ENCODE measurements at regions of chr9 and their contacts with region 1.

Region 1: DNA sequence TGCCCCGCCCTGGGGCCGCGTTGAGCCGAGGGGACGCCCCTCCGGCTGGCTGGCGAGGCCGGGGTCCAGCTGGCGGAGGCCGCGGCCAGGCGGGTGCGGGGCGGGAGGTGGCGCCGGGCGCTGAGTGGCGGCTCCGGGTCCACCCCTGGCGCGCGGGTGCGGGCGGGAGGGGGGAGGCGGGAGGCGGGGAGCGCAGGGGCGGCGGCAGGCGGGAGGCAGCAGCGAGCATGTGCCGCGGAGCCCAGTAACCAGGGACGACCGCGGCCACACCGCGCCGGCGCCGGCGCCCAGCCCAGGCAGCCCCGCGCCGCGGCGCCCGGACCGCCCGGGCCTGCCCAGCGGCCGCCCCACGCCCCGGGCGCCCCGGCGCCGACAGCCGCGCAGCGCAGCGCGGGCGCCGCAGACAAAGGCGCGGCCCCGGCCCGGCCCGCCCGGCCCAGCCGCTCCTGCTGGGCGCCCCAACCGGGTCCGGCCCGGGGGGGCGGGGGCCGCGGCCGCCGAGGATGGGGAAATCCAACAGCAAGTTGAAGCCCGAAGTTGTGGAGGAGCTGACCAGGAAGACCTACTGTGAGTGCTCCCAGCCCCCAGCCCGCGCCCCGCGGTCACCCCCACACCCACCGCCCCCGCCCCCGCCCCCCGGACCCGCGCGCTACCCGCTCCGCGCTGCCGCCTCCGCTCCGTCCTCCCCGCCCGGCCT is at the start of gene NCS1:
- DNase-seq: peak in 3 of 5 donors; percentile 12 to 22 (median 15)
- H3K4me3 ChIP-seq: no peak within 1 kb of the TSS
- H3K4me3 Mint-ChIP-seq: peak within 1 kb of the TSS; percentile 69 to 85 (median 78)
- H3K27ac ChIP-seq: no peak within 1 kb of the TSS
- H3K27ac Mint-ChIP-seq: peak within 1 kb of the TSS in 3 of 7 donors; percentile 10 to 36 (median 22)
- H3K4me1 ChIP-seq: peaks cover 6% of the 10 kb centered on the region
- H3K4me1 Mint-ChIP-seq: peaks cover 2 to 16% (median 4%) of the 10 kb centered on the region in 4 donors
- H3K27me3 ChIP-seq: peaks cover 12% of the 10 kb centered on the region
- H3K27me3 Mint-ChIP-seq: peaks cover 10 to 16% of the 10 kb centered on the region in 2 donors
- total RNA-seq, gene NCS1: 0.64 to 0.90 TPM

Region 2: DNA sequence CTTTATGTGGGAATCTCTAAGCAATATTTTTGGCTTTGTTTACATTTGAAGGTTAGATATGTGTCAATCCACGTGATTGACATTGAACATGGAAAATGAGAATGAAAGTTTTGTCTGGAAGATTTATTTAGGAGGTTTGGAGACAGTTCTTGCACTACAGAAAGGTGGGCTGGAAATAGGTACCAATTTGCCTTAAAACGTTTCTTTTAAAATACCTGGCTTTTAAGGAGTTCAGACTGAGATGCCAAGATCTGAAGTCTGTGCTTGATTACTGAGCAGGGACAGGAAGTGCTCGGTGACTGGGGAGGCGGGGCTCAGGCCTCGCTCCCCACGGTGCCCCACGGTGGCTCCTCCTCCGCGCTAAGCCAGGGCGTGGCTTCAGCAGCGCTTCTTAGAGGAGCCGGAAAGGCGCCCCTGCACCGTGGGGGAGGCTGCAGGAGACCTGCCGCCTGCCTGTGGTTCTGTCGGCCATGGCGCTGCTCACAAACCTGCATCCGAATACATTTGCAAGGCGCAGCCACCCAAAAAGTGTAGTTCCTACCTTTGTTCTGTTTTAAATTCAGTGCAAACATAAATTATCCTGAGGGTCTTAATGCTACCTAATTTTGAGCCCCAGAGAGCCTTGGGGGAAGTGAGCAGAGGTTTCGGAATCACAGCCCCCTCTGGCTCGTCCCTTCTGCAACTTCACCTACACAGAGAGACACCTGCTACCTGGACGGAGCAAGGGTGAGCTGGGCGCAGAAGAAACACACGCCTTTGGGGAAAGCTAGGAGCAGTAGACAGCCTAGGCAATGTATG is 287.9 kb before region 1 on chr9:
- CTCF ChIA-PET with region 1: no interaction called
- POLR2A ChIA-PET with region 1: no interaction called
- intact Hi-C with region 1: no loop called
- DNase-seq: peak; percentile 93 to 97 (median 95)
- H3K4me3 ChIP-seq: peak overlapping the region; percentile 78 to 80
- H3K4me3 Mint-ChIP-seq: peak overlapping the region; percentile 90 to 98 (median 94)
- H3K27ac ChIP-seq: peak overlapping the region; percentile 98
- H3K27ac Mint-ChIP-seq: peak overlapping the region; percentile 99 to 100 (median 100)
- H3K4me1 ChIP-seq: peaks cover 62% of the 10 kb centered on the region
- H3K4me1 Mint-ChIP-seq: peaks cover 26 to 60% (median 40%) of the 10 kb centered on the region in 4 donors
- H3K27me3 ChIP-seq: no peaks in the 10 kb centered on the region
- H3K27me3 Mint-ChIP-seq: no peaks in the 10 kb centered on the region

Region 3: GRCh38 chr9:130128733-130129431 is 43.4 kb before region 1 on chr9:
- CTCF ChIA-PET with region 1: no interaction called
- POLR2A ChIA-PET with region 1: no interaction called
- intact Hi-C with region 1: loop called (anchors 5 kb)
- DNase-seq: peak; percentile 53 to 89 (median 60)
- H3K4me3 ChIP-seq: peak overlapping the region in 1 of 2 donors; percentile 39
- H3K4me3 Mint-ChIP-seq: peak overlapping the region; percentile 79 to 87 (median 84)
- H3K27ac ChIP-seq: peak overlapping the region; percentile 92
- H3K27ac Mint-ChIP-seq: peak overlapping the region; percentile 97 to 100 (median 99)
- H3K4me1 ChIP-seq: peaks cover 60% of the 10 kb centered on the region
- H3K4me1 Mint-ChIP-seq: peaks cover 40 to 67% (median 53%) of the 10 kb centered on the region in 4 donors
- H3K27me3 ChIP-seq: no peaks in the 10 kb centered on the region
- H3K27me3 Mint-ChIP-seq: no peaks in the 10 kb centered on the region